CD4-positive, alpha-beta T cell (primary cell): ENCODE measurements at regions of chr17 and their contacts with region 1.

Region 1: GRCh38 chr17:77948690-77949114 is 9.8 kb upstream of the TNRC6C start:
- DNase-seq: no peak
- ATAC-seq: no peak
- H3K4me3 ChIP-seq: no peak overlapping the region
- H3K4me3 Mint-ChIP-seq: no peak overlapping the region
- H3K27ac ChIP-seq: no peak overlapping the region
- H3K27ac Mint-ChIP-seq: no peak overlapping the region
- H3K4me1 ChIP-seq: peaks cover 2% of the 10 kb centered on the region
- H3K4me1 Mint-ChIP-seq: no peaks in the 10 kb centered on the region
- H3K27me3 ChIP-seq: no peaks in the 10 kb centered on the region
- H3K27me3 Mint-ChIP-seq: peaks cover 6% of the 10 kb centered on the region
- CTCF ChIP-seq: no peak

Region 2: GRCh38 chr17:77899498-77899897 is 49.2 kb before region 1 on chr17:
- CTCF ChIA-PET with region 1: no interaction called
- POLR2A ChIA-PET with region 1: no interaction called
- intact Hi-C with region 1: loop called in 1 of 2 experiments (anchors 5 kb)
- DNase-seq: no peak
- ATAC-seq: no peak
- H3K4me3 ChIP-seq: no peak overlapping the region
- H3K4me3 Mint-ChIP-seq: no peak overlapping the region
- H3K27ac ChIP-seq: no peak overlapping the region
- H3K27ac Mint-ChIP-seq: no peak overlapping the region
- H3K4me1 ChIP-seq: peaks cover 9% of the 10 kb centered on the region
- H3K4me1 Mint-ChIP-seq: peaks cover 6% of the 10 kb centered on the region
- H3K27me3 ChIP-seq: no peaks in the 10 kb centered on the region
- H3K27me3 Mint-ChIP-seq: no peaks in the 10 kb centered on the region
- CTCF ChIP-seq: no peak

Region 3: GRCh38 chr17:78197147-78197832 is 248.6 kb after region 1 on chr17:
- CTCF ChIA-PET with region 1: no interaction called
- POLR2A ChIA-PET with region 1: no interaction called
- intact Hi-C with region 1: no loop called
- DNase-seq: no peak
- ATAC-seq: no peak
- H3K4me3 ChIP-seq: no peak overlapping the region
- H3K4me3 Mint-ChIP-seq: no peak overlapping the region
- H3K27ac ChIP-seq: no peak overlapping the region
- H3K27ac Mint-ChIP-seq: no peak overlapping the region
- H3K4me1 ChIP-seq: peaks cover 3% of the 10 kb centered on the region
- H3K4me1 Mint-ChIP-seq: no peaks in the 10 kb centered on the region
- H3K27me3 ChIP-seq: no peaks in the 10 kb centered on the region
- H3K27me3 Mint-ChIP-seq: no peaks in the 10 kb centered on the region
- CTCF ChIP-seq: no peak